Mammary epithelial cell (primary cell): ENCODE measurements at regions of chr15 and their contacts with region 1.

Region 1: GRCh38 chr15:80072285-80072994 is 13.0 kb downstream of the ZFAND6 start:
- DNase-seq: peak; percentile 93
- H3K4me3 ChIP-seq: peak overlapping the region; percentile 58 to 94 (median 72)
- H3K27ac ChIP-seq: peak overlapping the region; percentile 63
- H3K4me1 ChIP-seq: peaks cover 8% of the 10 kb centered on the region
- H3K27me3 ChIP-seq: no peaks in the 10 kb centered on the region
- CTCF ChIP-seq: no peak

Region 2: GRCh38 chr15:80121546-80121945 is 49.1 kb after region 1 on chr15:
- CTCF ChIA-PET with region 1: no interaction called
- dilution Hi-C with region 1: no loop called
- in situ Hi-C with region 1: no loop called
- intact Hi-C with region 1: no loop called
- DNase-seq: no peak
- H3K4me3 ChIP-seq: no peak overlapping the region
- H3K27ac ChIP-seq: no peak overlapping the region
- H3K4me1 ChIP-seq: no peaks in the 10 kb centered on the region
- H3K27me3 ChIP-seq: no peaks in the 10 kb centered on the region
- CTCF ChIP-seq: no peak

Region 3: GRCh38 chr15:80152180-80152845 is 79.9 kb after region 1 on chr15:
- CTCF ChIA-PET with region 1: no interaction called
- dilution Hi-C with region 1: no loop called
- in situ Hi-C with region 1: no loop called
- intact Hi-C with region 1: loop called (anchors 5 kb)
- DNase-seq: peak; percentile 84
- H3K4me3 ChIP-seq: peak overlapping the region; percentile 46 to 91 (median 54)
- H3K27ac ChIP-seq: peak overlapping the region; percentile 39
- H3K4me1 ChIP-seq: peaks cover 10% of the 10 kb centered on the region
- H3K27me3 ChIP-seq: no peaks in the 10 kb centered on the region
- CTCF ChIP-seq: no peak

Region 4: GRCh38 chr15:80202641-80203360 is 130.4 kb after region 1 on chr15:
- CTCF ChIA-PET with region 1: no interaction called
- dilution Hi-C with region 1: no loop called
- in situ Hi-C with region 1: no loop called
- intact Hi-C with region 1: loop called (anchors 1 kb)
- DNase-seq: peak; percentile 90
- H3K4me3 ChIP-seq: no peak overlapping the region
- H3K27ac ChIP-seq: no peak overlapping the region
- H3K4me1 ChIP-seq: peaks cover 19% of the 10 kb centered on the region
- H3K27me3 ChIP-seq: no peaks in the 10 kb centered on the region
- CTCF ChIP-seq: no peak

Region 5: GRCh38 chr15:80384432-80384831 is 312.0 kb after region 1 on chr15:
- CTCF ChIA-PET with region 1: interaction called, 14 read pairs
- dilution Hi-C with region 1: no loop called
- in situ Hi-C with region 1: no loop called
- intact Hi-C with region 1: no loop called
- DNase-seq: no peak
- H3K4me3 ChIP-seq: no peak overlapping the region
- H3K27ac ChIP-seq: no peak overlapping the region
- H3K4me1 ChIP-seq: no peaks in the 10 kb centered on the region
- H3K27me3 ChIP-seq: peaks cover 3% of the 10 kb centered on the region
- CTCF ChIP-seq: no peak